Left colon (tissue), 2 donors: ENCODE measurements at regions of chr7 and their contacts with region 1.

Region 1: DNA sequence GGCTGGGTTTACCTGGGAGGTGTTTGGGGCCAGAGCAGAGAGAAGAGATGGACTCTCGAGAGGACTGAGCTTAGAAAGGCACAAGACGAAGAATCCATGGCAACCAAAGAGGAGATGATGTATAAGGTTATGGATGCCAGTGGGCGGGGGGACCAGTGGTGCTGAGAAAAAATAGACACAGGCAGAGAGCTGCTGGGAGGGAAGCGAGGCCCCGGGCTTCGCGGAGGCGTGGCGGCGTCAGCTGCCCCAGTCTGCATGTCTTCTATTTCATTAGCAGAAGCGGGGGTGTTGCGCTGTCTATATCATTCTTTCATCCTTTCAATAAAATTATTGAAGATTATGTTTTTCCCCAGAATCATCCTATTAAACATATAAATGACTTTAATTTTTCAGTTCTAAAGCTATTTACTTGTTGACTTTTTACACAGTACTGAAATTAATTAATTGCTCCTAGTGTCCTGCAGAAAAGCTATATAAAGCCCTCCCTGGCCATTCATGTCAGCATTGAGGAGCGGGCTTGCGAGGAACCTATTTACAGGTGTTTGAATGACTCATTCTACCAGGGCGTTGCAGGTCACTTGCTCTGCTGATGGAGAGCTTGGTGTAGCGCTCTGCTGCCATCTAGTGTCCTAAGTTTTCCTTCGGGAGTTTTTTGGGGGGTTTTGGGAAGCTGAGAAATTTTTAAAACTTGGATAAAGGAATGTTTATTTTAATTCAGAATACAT is 42.9 kb upstream of the BHLHA15 start:
- DNase-seq: peak; percentile 41 to 66
- ATAC-seq: peak; percentile 59

Region 2: DNA sequence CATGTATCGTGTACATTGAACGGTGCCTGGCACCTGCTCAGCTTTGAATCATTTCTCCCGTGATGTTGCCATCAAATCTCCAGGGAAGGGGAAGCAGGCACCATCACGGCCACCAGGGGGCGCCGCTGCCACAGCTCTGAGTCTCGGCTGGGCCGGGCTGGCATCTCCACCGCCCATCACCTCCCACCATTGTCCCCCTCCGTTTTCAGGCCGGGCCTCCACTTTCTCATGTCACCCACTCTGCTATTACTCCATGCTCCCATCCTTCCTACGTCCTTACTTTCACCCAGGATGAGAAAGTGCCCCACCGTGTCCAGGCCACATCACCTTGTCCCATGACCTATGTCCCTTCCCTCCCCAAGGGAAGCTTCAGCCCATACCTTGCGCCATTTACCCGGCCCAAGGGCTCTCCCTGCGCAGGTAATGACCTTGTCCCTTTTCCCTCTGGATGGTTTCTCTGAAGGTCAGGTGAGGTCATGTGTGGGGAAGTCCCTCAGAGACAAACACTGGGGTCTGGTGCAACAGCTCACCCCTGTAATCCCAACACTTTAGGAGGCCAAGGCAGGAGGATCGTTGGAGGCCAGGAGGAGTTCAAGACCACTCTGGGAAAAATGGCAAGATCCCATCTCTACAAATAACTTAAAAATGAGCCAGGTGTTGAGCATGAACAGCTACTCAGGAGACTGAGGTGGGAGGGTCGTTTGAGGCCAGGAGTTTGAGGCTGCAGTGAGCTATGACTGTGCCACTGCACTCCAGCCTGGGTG is 146.6 kb before region 1 on chr7:
- intact Hi-C with region 1: loop called in 1 of 2 experiments (anchors 5 kb)
- DNase-seq: peak; percentile 39 to 87
- ATAC-seq: peak; percentile 89

Region 3: DNA sequence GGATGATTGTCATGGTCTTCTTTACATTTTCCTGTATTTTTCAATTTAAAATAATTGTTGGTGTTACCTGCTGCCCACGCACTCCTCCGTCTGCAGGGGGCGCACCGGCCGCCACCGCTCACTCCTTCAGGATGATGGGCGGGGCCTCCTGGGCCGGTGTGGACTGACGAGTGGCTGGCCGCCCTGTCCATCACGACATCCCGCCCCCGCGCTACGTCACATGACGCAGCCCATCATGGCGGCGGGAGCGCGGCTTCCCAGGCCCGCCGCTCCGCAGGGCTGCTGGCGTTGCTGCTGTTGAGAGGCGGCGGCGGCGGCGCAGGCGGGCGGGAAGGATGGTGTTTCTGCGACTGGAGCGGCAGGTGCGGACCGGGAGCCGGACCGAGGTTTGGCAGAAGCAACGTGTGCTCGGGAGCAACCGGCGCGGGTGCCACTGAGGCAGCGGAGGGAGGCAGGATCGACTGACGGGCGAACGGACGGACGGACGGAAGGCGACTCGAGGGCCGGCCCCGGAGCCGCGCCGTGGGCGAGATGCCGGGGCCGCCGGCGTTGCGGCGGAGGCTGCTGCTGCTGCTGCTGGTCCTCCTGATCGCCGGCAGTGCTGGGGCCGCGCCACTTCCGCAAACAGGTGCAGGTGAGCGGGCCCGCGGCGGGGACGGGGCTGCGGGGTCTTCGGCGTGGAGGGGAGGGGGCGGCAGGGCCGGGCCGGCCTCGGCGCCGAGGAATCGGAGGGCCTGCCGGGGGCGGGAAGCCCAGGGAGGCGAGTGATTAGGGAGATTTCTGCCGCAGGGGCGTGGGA is 61.5 kb before region 1 on chr7 and contains the start of gene LMTK2:
- intact Hi-C with region 1: loop called in 1 of 2 experiments (anchors 5 kb)
- DNase-seq: peak; percentile 89 to 99
- ATAC-seq: peak; percentile 91
- total RNA-seq, gene LMTK2: 51.4 to 52.0 TPM

Region 4: GRCh38 chr7:98126311-98127142 is 41.8 kb before region 1 on chr7:
- intact Hi-C with region 1: no loop called
- DNase-seq: no peak
- ATAC-seq: no peak

Region 5: GRCh38 chr7:98211221-98211675 is 42.9 kb after region 1 on chr7 and contains the start of gene BHLHA15:
- intact Hi-C with region 1: no loop called
- DNase-seq: peak; percentile 70 to 79
- ATAC-seq: peak; percentile 68
- total RNA-seq, gene BHLHA15: 1.0 to 3.3 TPM

Region 6: GRCh38 chr7:98234429-98235147 is 66.2 kb after region 1 on chr7:
- intact Hi-C with region 1: no loop called
- DNase-seq: no peak
- ATAC-seq: no peak

Region 7: GRCh38 chr7:98493030-98493778 is 324.9 kb after region 1 on chr7:
- intact Hi-C with region 1: no loop called
- DNase-seq: no peak
- ATAC-seq: no peak